ENCODE measurements at regions of chr14 and their contacts with region 1.

Region 1: DNA sequence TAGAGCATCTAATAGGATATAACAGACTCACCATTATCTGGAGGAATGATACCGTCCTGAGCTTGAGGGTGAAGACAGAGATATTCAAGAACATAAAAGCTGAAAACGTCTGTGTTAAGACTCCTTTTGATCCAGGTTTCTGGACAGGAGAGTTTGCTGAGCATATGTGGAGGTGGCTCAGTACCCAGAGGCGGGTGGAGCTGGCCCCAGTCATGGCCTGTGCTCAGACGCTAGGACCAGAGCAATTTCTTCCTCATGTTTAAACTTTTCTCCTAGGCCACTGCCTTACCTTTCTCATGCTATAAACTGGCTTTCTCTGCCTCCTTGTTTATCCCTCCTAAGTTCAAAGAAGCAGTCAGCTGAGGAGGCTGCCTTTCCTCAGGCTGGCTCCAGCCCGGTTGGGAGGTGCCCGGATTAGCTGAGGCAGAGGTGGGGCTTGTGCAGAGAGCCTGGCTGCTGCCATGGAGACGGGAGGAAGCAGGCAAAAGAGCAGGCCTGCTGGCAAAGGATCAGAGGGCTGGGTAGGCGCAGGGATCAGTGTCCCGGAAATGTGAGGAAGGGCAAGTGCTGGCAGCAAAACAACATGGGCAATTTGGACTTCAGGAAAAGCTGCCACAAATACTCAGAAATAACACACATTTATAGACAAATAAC is 13.7 kb downstream of the COA8 start:
- DNase-seq: peak; percentile 29 to 83 (median 69)
- H3K4me3 ChIP-seq: peak overlapping the region in 21 of 59 donors; percentile 0 to 38 (median 18)
- H3K27ac ChIP-seq: peak overlapping the region in 58 of 59 donors; percentile 4 to 92 (median 75)
- H3K27me3 ChIP-seq: no peaks in the 10 kb centered on the region
- CTCF ChIP-seq: peak in 2 of 56 donors; percentile 5 to 18

Region 2: GRCh38 chr14:103488960-103489359 is 87.5 kb before region 1 on chr14:
- intact Hi-C with region 1: no loop called
- DNase-seq: no peak
- H3K4me3 ChIP-seq: no peak overlapping the region
- H3K27ac ChIP-seq: peak overlapping the region in 7 of 59 donors; percentile 1 to 51 (median 22)
- H3K27me3 ChIP-seq: no peaks in the 10 kb centered on the region
- CTCF ChIP-seq: no peak

Region 3: GRCh38 chr14:103594265-103594664 is 17.8 kb after region 1 on chr14:
- intact Hi-C with region 1: no loop called
- DNase-seq: peak; percentile 25 to 88 (median 84)
- H3K4me3 ChIP-seq: peak overlapping the region in 54 of 59 donors; percentile 0 to 58 (median 36)
- H3K27ac ChIP-seq: peak overlapping the region; percentile 43 to 98 (median 93)
- H3K27me3 ChIP-seq: no peaks in the 10 kb centered on the region
- CTCF ChIP-seq: peak in 24 of 56 donors; percentile 6 to 37 (median 21)

Region 4: DNA sequence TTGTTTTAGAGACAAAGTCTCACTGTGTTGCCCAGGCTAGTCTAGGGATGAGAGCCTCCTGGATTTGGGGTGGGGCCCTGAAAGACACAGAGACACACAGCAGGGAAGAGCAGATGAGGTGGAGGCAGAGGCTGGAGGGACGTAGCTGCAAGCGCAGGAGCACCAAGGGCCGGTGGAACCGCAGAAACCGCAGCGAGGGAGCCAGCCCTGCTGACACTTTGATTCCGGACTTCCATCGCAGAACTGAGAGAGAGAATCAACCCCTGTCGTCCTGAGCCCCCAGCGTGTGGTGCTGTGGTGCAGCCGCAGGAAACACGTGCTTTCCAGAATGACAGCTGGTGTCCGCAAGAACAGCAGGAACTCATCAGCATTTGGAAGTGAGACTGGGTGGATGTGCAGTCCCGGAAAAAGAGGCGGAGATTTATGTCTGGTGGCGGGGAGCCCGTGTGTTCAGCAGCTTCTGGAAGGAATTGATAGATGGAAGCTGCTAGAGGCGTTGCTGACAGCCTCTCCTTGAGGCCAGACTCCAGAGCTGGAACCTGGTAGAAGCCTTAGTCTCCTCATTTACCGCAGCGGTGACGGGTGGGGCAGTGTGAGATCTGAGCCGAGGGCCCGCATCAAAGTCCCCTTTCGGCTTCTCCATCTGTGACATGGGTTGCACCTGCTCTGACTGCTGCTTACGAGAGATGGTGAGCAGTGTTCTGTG is 30.6 kb after region 1 on chr14:
- intact Hi-C with region 1: loop called in 1 of 2 experiments (anchors 5 kb)
- DNase-seq: peak; percentile 48 to 88 (median 82)
- H3K4me3 ChIP-seq: peak overlapping the region; percentile 9 to 65 (median 47)
- H3K27ac ChIP-seq: peak overlapping the region in 53 of 59 donors; percentile 11 to 90 (median 69)
- H3K27me3 ChIP-seq: no peaks in the 10 kb centered on the region
- CTCF ChIP-seq: peak in 49 of 56 donors; percentile 19 to 64 (median 41)

Region 5: GRCh38 chr14:103628684-103629502 is 52.4 kb after region 1 on chr14 and contains the start of gene KLC1:
- intact Hi-C with region 1: loop called in 1 of 2 experiments (anchors 5 kb)
- DNase-seq: peak; percentile 70 to 92 (median 80)
- H3K4me3 ChIP-seq: peak within 1 kb of the TSS; percentile 72 to 99 (median 93)
- H3K27ac ChIP-seq: peak within 1 kb of the TSS; percentile 89 to 99 (median 97)
- H3K27me3 ChIP-seq: no peaks in the 10 kb centered on the region
- CTCF ChIP-seq: peak in 20 of 56 donors; percentile 5 to 33 (median 20)
- total RNA-seq, gene KLC1: 362 to 692 (median 542) TPM

Region 6: GRCh38 chr14:103715052-103716000 is 138.8 kb after region 1 on chr14 and contains the starts of genes XRCC3 and ZFYVE21:
- intact Hi-C with region 1: loop called in 1 of 2 experiments (anchors 10 kb)
- DNase-seq: peak; percentile 98 to 100 (median 99)
- H3K4me3 ChIP-seq: peak within 1 kb of the TSS; percentile 64 to 97 (median 84)
- H3K27ac ChIP-seq: peak within 1 kb of the TSS in 50 of 59 donors; percentile 10 to 99 (median 71)
- H3K27me3 ChIP-seq: no peaks in the 10 kb centered on the region
- CTCF ChIP-seq: peak in 5 of 56 donors; percentile 7 to 33 (median 13)
- total RNA-seq, gene XRCC3: 4.7 to 19.1 (median 9.9) TPM
- total RNA-seq, gene ZFYVE21: 71.0 to 188 (median 111) TPM

Region 7: DNA sequence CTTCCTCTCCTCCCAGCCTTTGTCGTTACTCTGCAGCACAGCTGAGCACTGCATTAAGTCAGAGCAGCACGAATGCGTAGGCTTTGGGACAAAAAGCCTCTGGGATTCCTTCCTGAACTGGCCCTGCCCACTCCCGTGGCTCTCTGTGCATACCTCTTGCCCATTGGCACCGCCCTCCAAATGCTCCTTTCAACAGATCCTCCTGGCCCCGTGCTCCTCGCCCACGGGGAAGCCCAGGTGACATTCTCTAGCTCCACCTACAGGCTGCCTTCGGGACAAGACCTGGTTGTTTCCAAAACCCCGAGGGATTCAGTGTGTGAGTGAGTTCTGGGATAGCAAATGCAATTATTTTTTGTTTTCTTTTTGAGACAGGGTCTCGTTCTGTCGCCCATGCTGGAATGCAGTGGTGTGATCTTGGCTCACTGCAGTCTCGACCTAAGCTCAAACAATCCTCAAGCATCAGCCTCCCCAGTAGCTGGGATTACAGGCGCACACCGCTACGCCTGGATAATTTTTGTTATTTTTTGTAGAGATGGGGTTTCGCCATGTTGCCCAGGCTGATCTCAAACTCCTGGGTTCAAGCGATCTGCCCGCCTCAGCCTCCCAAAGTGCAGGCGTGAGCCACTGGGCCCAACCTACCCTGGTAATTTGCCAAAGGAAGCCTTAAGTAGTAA is 333.9 kb after region 1 on chr14:
- intact Hi-C with region 1: loop called in 1 of 2 experiments (anchors 10 kb)
- DNase-seq: peak; percentile 39 to 93 (median 78)
- H3K4me3 ChIP-seq: peak overlapping the region in 18 of 59 donors; percentile 0 to 32 (median 12)
- H3K27ac ChIP-seq: peak overlapping the region in 28 of 59 donors; percentile 6 to 65 (median 31)
- H3K27me3 ChIP-seq: no peaks in the 10 kb centered on the region
- CTCF ChIP-seq: peak; percentile 45 to 87 (median 78)

Region 8: GRCh38 chr14:103984196-103984595 is 407.7 kb after region 1 on chr14:
- intact Hi-C with region 1: loop called in 1 of 2 experiments (anchors 5 kb)
- DNase-seq: no peak
- H3K4me3 ChIP-seq: no peak overlapping the region
- H3K27ac ChIP-seq: no peak overlapping the region
- H3K27me3 ChIP-seq: no peaks in the 10 kb centered on the region
- CTCF ChIP-seq: no peak